ENCODE measurements at regions of chr11 and their contacts with region 1.

Region 1: DNA sequence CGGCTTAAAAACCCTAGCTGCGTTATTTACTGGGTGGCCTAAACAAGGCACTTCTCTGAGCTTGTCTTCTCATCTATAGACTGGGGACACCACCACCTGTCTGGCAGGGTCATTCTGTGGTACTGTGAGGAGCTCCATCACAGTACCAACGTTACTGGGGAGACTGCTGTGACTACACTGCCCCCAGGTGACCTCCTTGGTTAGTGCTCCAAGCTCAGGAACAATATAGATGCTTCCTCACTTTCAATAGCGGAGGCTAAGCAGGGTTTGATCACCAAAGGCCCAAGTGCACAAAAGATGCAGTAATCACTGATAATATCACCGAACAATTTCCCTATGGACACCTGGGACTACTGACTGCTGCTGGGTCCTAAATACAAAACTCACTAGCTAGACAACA is 18.8 kb downstream of the PRPF19 start:
- DNase-seq: peak; percentile 60
- ATAC-seq: peak; percentile 99
- H3K4me3 Mint-ChIP-seq: no peak overlapping the region
- H3K27ac Mint-ChIP-seq: no peak overlapping the region
- H3K4me1 Mint-ChIP-seq: no peaks in the 10 kb centered on the region
- H3K27me3 Mint-ChIP-seq: no peaks in the 10 kb centered on the region
- CTCF ChIP-seq: peak; percentile 35; the same call in 1 of the 2 replicates

Region 2: DNA sequence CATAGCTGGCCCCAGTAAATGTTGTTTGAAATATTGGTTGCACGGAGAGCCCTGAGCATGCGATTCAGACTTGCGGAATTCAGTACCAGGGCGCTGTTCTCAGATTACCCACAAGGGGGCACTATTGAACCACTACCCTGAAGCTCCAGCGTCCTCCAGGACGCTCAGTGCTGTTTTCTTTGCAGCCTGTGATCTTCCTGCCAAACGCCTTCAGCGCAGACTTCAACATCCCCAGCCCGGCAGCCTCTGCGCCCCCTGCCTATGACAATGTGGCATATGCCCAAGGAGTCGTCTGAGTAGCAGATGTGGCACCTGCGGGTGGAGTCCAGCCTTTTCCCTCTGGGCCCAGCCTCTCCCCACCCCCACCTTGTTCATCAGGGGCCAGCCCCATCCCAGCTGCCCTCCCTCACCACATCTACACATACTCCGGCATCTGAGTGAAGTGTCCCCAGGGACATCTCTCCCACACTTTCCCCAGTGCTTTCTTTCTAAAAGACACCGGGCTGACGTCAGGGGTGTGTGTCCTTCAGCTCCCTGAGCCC is 112.1 kb before region 1 on chr11:
- CTCF ChIA-PET with region 1: interaction called, 76 read pairs
- POLR2A ChIA-PET with region 1: no interaction called
- DNase-seq: peak; percentile 93
- ATAC-seq: peak; percentile 99
- H3K4me3 Mint-ChIP-seq: no peak overlapping the region
- H3K27ac Mint-ChIP-seq: no peak overlapping the region
- H3K4me1 Mint-ChIP-seq: peaks cover 7% of the 10 kb centered on the region
- H3K27me3 Mint-ChIP-seq: peaks cover 5% of the 10 kb centered on the region; the same call in 1 of the 2 replicates
- CTCF ChIP-seq: peak; percentile 89

Region 3: DNA sequence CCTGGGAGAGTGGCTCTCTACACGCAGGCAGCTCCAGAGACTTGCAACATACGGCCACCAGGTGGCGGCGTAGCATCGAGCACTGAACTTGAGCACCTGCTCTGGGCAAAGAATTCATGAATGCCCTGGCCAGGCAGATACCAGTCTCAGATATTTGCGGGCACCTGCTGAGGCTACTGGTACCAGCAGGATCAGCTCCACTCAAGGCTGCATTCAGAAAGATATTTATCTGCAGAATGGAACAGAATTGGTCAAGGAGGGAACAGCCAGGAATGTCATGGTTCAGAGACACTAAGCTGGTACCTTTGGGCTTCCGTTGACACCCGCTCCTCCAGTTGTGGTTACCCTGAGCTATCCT is 56.4 kb before region 1 on chr11:
- CTCF ChIA-PET with region 1: interaction called, 277 read pairs
- POLR2A ChIA-PET with region 1: interaction called, 3 read pairs
- DNase-seq: peak; percentile 83
- ATAC-seq: peak; percentile 95
- H3K4me3 Mint-ChIP-seq: peak overlapping the region; percentile 22; the same call in 1 of the 2 replicates
- H3K27ac Mint-ChIP-seq: no peak overlapping the region
- H3K4me1 Mint-ChIP-seq: no peaks in the 10 kb centered on the region
- H3K27me3 Mint-ChIP-seq: peaks cover 11% of the 10 kb centered on the region
- CTCF ChIP-seq: peak; percentile 90

Region 4: DNA sequence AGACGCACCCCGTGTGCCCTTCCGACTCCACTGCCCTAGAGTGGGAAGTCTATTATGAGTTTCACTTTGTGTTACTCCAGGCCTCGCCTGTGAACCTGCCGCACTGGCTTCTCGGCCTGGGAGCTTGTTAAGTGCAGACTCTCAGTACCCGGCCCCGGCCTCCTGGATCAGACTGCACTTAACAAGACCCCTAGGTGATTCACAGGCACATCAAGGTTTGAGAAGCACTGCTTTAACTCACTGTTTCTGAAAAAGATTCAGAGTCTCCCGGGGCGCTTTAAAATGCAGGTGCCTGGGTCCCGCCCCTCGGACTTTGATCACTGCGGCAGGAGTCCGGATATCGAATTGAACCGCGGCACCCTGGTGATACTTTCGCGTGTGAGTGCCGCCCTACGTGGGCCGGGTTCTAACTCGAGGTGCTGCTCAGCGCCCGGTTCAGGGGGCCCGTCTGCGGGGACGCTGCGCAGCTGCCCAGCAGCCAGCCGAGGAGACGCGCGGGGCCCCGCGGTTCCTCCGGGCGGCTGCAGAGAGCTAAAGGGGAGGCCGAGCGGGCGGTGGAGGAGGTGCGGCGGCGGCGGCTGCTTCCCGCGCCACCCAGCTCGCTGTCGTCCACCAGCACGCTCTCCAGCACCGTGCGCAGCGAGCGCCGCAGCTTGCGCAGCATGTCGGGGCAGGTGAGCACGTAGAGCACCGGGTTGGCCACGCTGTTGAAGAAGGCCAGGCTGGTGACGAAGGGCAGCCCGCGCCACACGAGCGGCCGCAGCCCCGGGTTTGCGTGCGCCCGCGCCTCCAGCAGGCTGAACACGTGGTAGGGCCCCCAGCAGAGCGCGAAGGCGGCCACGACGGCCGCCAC is 35.2 kb before region 1 on chr11:
- CTCF ChIA-PET with region 1: interaction called, 13 read pairs
- POLR2A ChIA-PET with region 1: interaction called, 3 read pairs
- DNase-seq: peak; percentile 51
- ATAC-seq: peak; percentile 63
- H3K4me3 Mint-ChIP-seq: peak overlapping the region; percentile 53
- H3K27ac Mint-ChIP-seq: no peak overlapping the region
- H3K4me1 Mint-ChIP-seq: peaks cover 10% of the 10 kb centered on the region
- H3K27me3 Mint-ChIP-seq: peaks cover 13% of the 10 kb centered on the region
- CTCF ChIP-seq: no peak

Region 5: GRCh38 chr11:60899046-60899936 is 11.7 kb after region 1 on chr11:
- CTCF ChIA-PET with region 1: interaction called, 64 read pairs
- POLR2A ChIA-PET with region 1: no interaction called
- DNase-seq: peak; percentile 38
- ATAC-seq: peak; percentile 79
- H3K4me3 Mint-ChIP-seq: no peak overlapping the region
- H3K27ac Mint-ChIP-seq: no peak overlapping the region; the same call in 1 of the 2 replicates
- H3K4me1 Mint-ChIP-seq: peaks cover 4% of the 10 kb centered on the region
- H3K27me3 Mint-ChIP-seq: no peaks in the 10 kb centered on the region
- CTCF ChIP-seq: peak; percentile 80

Region 6: DNA sequence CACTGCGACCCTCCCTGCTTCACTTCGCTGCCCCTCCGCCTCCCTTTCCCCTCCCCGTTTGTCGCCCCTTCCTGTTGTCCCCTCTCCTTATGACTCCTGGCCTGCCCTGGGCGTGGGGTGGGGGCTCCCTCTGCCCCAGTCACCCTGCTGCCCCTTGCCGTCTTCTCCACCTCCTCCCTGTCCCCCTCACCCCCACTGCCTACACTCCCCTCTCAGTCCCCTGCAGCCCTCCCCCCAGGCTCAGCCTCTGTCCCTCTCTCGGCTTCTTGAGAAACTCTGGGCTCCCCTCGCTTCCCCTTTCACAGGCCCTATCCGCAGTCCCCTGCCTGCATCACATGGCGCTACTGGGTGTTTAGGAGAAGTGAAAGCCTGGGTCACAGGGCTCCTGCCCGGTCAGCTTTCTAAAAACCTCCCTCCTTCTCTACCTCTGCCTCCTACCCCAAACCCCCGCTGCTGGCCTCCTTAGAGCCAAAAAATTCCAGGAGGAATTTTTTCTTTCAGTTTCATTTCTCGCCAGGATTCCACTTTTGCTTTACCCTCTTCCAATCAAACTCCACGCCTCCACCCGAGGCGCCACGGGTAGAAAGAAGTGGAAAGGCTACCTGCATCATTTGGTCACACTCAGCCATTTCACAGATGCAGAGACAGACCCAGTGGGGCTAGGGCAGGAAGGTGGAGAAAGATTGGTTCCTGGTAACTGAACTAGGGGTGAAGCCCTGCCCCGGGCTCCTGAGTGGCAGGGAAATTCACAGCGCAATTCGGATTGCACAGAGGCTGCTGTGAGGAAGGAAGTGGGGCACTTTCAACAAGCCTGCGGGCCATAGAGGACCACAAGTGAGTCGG is 64.6 kb after region 1 on chr11 and contains the start of gene SLC15A3:
- CTCF ChIA-PET with region 1: no interaction called
- POLR2A ChIA-PET with region 1: no interaction called
- DNase-seq: peak; percentile 55
- ATAC-seq: peak; percentile 59
- H3K4me3 Mint-ChIP-seq: peak within 1 kb of the TSS; percentile 69
- H3K27ac Mint-ChIP-seq: peak within 1 kb of the TSS; percentile 92; the same call in 1 of the 2 replicates
- H3K4me1 Mint-ChIP-seq: peaks cover 32% of the 10 kb centered on the region
- H3K27me3 Mint-ChIP-seq: peaks cover 42% of the 10 kb centered on the region
- CTCF ChIP-seq: no peak
- total RNA-seq, gene SLC15A3: 10.2 to 12.1 TPM (median 11.5 TPM) in 3 replicates